Caco-2 (cell line): ENCODE measurements at regions of chr14 and their contacts with region 1.

Region 1: GRCh38 chr14:75709207-75709812 is 48.3 kb downstream of the TTLL5 start:
- DNase-seq: peak; percentile 72 to 74
- H3K4me3 ChIP-seq: no peak overlapping the region
- H3K4me3 Mint-ChIP-seq: no peak overlapping the region
- H3K27ac Mint-ChIP-seq: no peak overlapping the region
- H3K4me1 ChIP-seq: peaks cover 21% of the 10 kb centered on the region
- H3K4me1 Mint-ChIP-seq: peaks cover 24% of the 10 kb centered on the region
- H3K27me3 ChIP-seq: no peaks in the 10 kb centered on the region
- H3K27me3 Mint-ChIP-seq: no peaks in the 10 kb centered on the region
- CTCF ChIP-seq: peak; percentile 69 to 76

Region 2: GRCh38 chr14:75769047-75769685 is 59.9 kb after region 1 on chr14:
- CTCF ChIA-PET with region 1: no interaction called
- POLR2A ChIA-PET with region 1: no interaction called
- intact Hi-C with region 1: no loop called
- DNase-seq: no peak
- H3K4me3 ChIP-seq: no peak overlapping the region
- H3K4me3 Mint-ChIP-seq: no peak overlapping the region
- H3K27ac Mint-ChIP-seq: no peak overlapping the region
- H3K4me1 ChIP-seq: no peaks in the 10 kb centered on the region
- H3K4me1 Mint-ChIP-seq: no peaks in the 10 kb centered on the region
- H3K27me3 ChIP-seq: no peaks in the 10 kb centered on the region
- H3K27me3 Mint-ChIP-seq: no peaks in the 10 kb centered on the region
- CTCF ChIP-seq: no peak

Region 3: DNA sequence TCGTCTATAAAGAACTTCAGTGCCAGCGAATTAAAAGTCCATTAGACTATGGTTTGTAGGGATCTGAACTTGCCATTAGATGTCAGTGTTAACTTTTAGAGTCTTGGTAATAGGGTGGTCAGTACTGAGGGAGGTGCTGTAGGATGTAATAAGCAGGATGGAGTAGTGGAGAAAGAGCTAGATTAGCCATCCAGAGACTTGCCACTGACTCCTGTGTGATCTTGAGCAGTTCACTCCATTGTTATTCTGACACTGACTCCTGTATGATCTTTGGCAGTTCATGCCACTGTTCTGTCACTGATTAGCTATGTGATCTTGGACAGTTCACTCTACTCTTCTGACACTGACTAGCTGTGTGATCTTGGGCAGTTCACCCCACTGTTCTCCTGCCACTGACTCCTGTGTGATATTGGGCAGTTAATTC is 85.3 kb after region 1 on chr14:
- CTCF ChIA-PET with region 1: interaction called, 18 read pairs
- POLR2A ChIA-PET with region 1: no interaction called
- intact Hi-C with region 1: loop called (anchors 1 kb)
- DNase-seq: peak in 1 of 2 experiments; percentile 42
- H3K4me3 ChIP-seq: no peak overlapping the region
- H3K4me3 Mint-ChIP-seq: no peak overlapping the region
- H3K27ac Mint-ChIP-seq: no peak overlapping the region
- H3K4me1 ChIP-seq: no peaks in the 10 kb centered on the region
- H3K4me1 Mint-ChIP-seq: peaks cover 5% of the 10 kb centered on the region
- H3K27me3 ChIP-seq: no peaks in the 10 kb centered on the region
- H3K27me3 Mint-ChIP-seq: no peaks in the 10 kb centered on the region
- CTCF ChIP-seq: peak; percentile 28 to 57

Region 4: GRCh38 chr14:75831458-75831857 is 122.1 kb after region 1 on chr14:
- CTCF ChIA-PET with region 1: interaction called, 3 read pairs
- POLR2A ChIA-PET with region 1: no interaction called
- intact Hi-C with region 1: loop called (anchors 1 kb)
- DNase-seq: peak; percentile 92
- H3K4me3 ChIP-seq: no peak overlapping the region
- H3K4me3 Mint-ChIP-seq: peak overlapping the region; percentile 44
- H3K27ac Mint-ChIP-seq: peak overlapping the region; percentile 87
- H3K4me1 ChIP-seq: peaks cover 58% of the 10 kb centered on the region
- H3K4me1 Mint-ChIP-seq: peaks cover 24% of the 10 kb centered on the region
- H3K27me3 ChIP-seq: no peaks in the 10 kb centered on the region
- H3K27me3 Mint-ChIP-seq: no peaks in the 10 kb centered on the region
- CTCF ChIP-seq: no peak

Region 5: GRCh38 chr14:75982266-75983018 is 273.1 kb after region 1 on chr14:
- CTCF ChIA-PET with region 1: interaction called, 85 read pairs
- POLR2A ChIA-PET with region 1: no interaction called
- intact Hi-C with region 1: loop called (anchors 1 kb)
- DNase-seq: peak; percentile 78 to 89
- H3K4me3 ChIP-seq: peak overlapping the region; percentile 56
- H3K4me3 Mint-ChIP-seq: peak overlapping the region; percentile 79
- H3K27ac Mint-ChIP-seq: peak overlapping the region; percentile 39
- H3K4me1 ChIP-seq: peaks cover 8% of the 10 kb centered on the region
- H3K4me1 Mint-ChIP-seq: peaks cover 34% of the 10 kb centered on the region
- H3K27me3 ChIP-seq: no peaks in the 10 kb centered on the region
- H3K27me3 Mint-ChIP-seq: no peaks in the 10 kb centered on the region
- CTCF ChIP-seq: peak; percentile 77 to 78